ENCODE measurements at regions of chr15 and their contacts with region 1.

Region 1: GRCh38 chr15:67127965-67128364 is 62.6 kb downstream of the SMAD3 start:
- DNase-seq: no peak
- H3K4me3 Mint-ChIP-seq: peak overlapping the region; percentile 56
- H3K27ac Mint-ChIP-seq: peak overlapping the region; percentile 85
- H3K4me1 Mint-ChIP-seq: peaks cover 66% of the 10 kb centered on the region
- H3K27me3 Mint-ChIP-seq: no peaks in the 10 kb centered on the region
- CTCF ChIP-seq: no peak

Region 2: DNA sequence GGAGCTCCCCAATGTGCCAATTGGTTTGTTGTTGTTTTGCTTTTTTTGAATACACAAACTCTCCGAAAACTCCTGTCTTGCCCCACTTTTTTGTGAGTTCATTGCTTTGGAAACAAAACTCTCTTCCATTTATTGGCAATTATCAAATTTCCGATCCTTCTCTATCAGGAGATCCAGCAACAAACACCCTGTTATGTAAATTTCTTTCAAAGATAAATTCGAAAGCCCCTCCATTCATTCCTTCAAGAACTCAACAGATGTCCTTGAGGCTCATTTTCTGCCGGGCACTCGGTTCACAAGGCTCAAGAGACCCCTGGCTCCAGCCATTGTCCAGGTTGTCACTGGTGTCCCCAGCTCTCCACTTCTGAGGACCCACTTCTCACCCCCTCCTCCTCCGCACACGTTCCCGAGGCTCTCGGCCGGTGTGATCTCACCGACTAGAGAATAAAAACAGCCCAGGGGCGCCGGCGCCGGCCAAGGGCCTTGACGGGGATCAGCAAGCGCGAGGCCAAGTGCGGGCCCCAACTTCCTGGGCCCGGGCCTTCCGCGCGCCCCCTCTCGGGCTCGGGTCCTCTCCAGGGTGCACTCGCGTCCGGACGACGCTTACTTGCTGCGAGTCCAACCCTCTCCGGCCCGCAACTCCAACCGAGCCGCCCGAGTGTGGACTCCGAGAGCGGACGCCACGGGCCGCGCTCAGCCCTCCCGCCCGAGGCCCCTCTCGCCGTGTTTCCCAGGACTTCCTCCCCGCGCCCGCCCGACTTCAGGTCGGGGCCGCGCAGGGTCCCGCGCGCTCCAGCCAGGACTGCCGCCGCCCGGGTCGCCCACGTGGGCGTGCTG is 63.1 kb before region 1 on chr15:
- CTCF ChIA-PET with region 1: no interaction called
- intact Hi-C with region 1: no loop called
- DNase-seq: peak; percentile 67
- H3K4me3 Mint-ChIP-seq: peak overlapping the region; percentile 85
- H3K27ac Mint-ChIP-seq: peak overlapping the region; percentile 80
- H3K4me1 Mint-ChIP-seq: peaks cover 47% of the 10 kb centered on the region
- H3K27me3 Mint-ChIP-seq: no peaks in the 10 kb centered on the region
- CTCF ChIP-seq: no peak

Region 3: GRCh38 chr15:67150028-67150860 is 22.3 kb after region 1 on chr15:
- CTCF ChIA-PET with region 1: interaction called, 13 read pairs
- intact Hi-C with region 1: no loop called
- DNase-seq: peak; percentile 92
- H3K4me3 Mint-ChIP-seq: peak overlapping the region; percentile 44
- H3K27ac Mint-ChIP-seq: peak overlapping the region; percentile 79
- H3K4me1 Mint-ChIP-seq: peaks cover 67% of the 10 kb centered on the region
- H3K27me3 Mint-ChIP-seq: no peaks in the 10 kb centered on the region
- CTCF ChIP-seq: no peak

Region 4: GRCh38 chr15:67366904-67367303 is 238.9 kb after region 1 on chr15:
- CTCF ChIA-PET with region 1: no interaction called
- intact Hi-C with region 1: no loop called
- DNase-seq: no peak
- H3K4me3 Mint-ChIP-seq: no peak overlapping the region
- H3K27ac Mint-ChIP-seq: no peak overlapping the region
- H3K4me1 Mint-ChIP-seq: no peaks in the 10 kb centered on the region
- H3K27me3 Mint-ChIP-seq: no peaks in the 10 kb centered on the region
- CTCF ChIP-seq: no peak

Measured in Calu3 (cell line).